CD8-positive, alpha-beta T cell (primary cell): ENCODE measurements at regions of chr3 and their contacts with region 1.

Region 1: DNA sequence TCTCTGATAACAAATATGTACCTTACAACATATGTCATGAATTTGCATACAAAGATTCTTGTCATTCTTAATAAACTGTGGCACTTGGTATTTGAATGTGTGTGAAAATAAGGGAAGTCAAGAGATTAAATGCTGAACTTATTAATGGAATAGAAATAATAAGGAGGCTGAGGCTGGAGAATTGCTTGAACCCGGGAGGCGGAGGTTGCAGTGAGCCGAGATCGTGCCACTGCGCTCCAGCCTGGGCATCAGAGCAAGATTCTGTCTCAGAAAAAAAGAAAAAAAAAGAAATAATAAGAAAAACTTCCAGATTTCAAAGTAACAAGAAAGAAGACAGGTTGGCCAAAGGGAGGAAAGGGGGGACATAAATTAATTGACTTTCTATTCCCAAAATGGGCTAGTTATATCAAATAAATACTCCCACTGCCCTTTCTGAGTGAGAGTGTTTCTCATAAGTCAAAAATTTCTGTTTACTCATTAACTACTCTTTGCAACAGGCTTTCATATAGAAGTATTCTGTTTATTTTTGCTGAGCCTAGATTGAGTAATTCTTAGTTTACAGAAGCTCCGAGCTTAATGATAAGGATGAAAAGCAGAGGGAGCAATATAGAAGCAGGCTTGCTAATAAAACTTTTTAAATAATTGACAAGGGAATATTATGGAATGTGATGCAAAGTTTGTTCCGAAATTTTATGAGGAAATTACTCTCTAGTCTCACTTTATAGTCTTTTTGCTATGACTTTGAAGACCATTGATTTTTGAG is 25.6 kb downstream of the KNG1 start:
- DNase-seq: no peak
- ATAC-seq: no peak
- H3K4me3 ChIP-seq: no peak overlapping the region
- H3K4me3 Mint-ChIP-seq: no peak overlapping the region
- H3K27ac ChIP-seq: no peak overlapping the region
- H3K27ac Mint-ChIP-seq: no peak overlapping the region
- H3K4me1 ChIP-seq: no peaks in the 10 kb centered on the region
- H3K4me1 Mint-ChIP-seq: peaks cover 2% of the 10 kb centered on the region
- H3K27me3 ChIP-seq: no peaks in the 10 kb centered on the region
- H3K27me3 Mint-ChIP-seq: no peaks in the 10 kb centered on the region
- CTCF ChIP-seq: no peak

Region 2: GRCh38 chr3:186608624-186609215 is 134.1 kb before region 1 on chr3:
- CTCF ChIA-PET with region 1: no interaction called
- POLR2A ChIA-PET with region 1: no interaction called
- intact Hi-C with region 1: no loop called
- DNase-seq: no peak
- ATAC-seq: no peak
- H3K4me3 ChIP-seq: no peak overlapping the region
- H3K4me3 Mint-ChIP-seq: no peak overlapping the region
- H3K27ac ChIP-seq: no peak overlapping the region
- H3K27ac Mint-ChIP-seq: no peak overlapping the region
- H3K4me1 ChIP-seq: no peaks in the 10 kb centered on the region
- H3K4me1 Mint-ChIP-seq: no peaks in the 10 kb centered on the region
- H3K27me3 ChIP-seq: no peaks in the 10 kb centered on the region
- H3K27me3 Mint-ChIP-seq: peaks cover 4% of the 10 kb centered on the region
- CTCF ChIP-seq: no peak

Region 3: DNA sequence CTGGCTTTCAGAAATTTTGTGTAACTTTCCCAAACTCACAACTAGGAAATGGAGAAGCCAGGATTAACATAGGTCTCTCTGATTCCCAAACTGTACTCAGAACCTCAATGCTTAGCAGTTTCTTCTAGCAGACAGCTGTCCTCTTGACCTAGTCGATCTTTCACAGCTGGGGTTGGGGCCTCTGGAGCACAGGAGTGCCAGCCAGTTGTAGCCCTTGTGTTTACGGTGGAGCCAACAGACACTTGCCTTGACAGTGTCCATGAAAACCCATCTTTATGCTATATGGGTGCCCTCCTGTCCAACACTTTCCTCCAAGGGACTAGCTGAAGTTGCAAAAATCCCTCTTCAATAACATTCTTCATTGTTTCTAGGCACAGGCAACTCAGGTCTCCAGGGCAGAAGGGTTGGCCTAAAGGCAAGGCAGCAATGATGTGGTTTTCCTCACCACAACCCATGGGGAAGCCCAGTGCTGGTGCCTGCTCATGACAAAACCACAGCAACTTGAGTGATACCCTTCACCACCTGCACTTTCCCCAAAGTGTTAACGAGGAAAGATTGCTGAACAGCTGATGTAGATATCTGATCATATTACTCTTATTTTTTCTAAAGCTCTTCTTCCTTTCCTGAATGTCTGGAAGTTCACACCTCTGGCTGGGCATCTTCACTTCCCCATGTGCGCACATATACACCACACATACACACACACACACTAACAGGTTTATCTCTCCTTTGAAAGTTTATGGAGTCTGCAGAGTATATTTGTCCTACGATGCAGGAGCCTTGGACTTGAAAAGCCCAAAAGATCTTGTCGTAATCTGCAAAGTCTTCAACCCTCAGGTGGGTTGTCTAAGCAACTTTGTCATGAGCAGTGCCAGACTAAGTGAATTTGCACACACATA is 36.7 kb before region 1 on chr3:
- CTCF ChIA-PET with region 1: interaction called, 3 read pairs
- POLR2A ChIA-PET with region 1: no interaction called
- intact Hi-C with region 1: loop called in 1 of 2 experiments (anchors 2 kb)
- DNase-seq: peak in 5 of 9 experiments; percentile 4 to 77 (median 66)
- ATAC-seq: peak; percentile 99
- H3K4me3 ChIP-seq: no peak overlapping the region
- H3K4me3 Mint-ChIP-seq: no peak overlapping the region
- H3K27ac ChIP-seq: no peak overlapping the region
- H3K27ac Mint-ChIP-seq: no peak overlapping the region
- H3K4me1 ChIP-seq: no peaks in the 10 kb centered on the region
- H3K4me1 Mint-ChIP-seq: peaks cover 11% of the 10 kb centered on the region
- H3K27me3 ChIP-seq: peaks cover 0 to 10% of the 10 kb centered on the region in 2 experiments
- H3K27me3 Mint-ChIP-seq: peaks cover 34% of the 10 kb centered on the region
- CTCF ChIP-seq: no peak

Region 4: DNA sequence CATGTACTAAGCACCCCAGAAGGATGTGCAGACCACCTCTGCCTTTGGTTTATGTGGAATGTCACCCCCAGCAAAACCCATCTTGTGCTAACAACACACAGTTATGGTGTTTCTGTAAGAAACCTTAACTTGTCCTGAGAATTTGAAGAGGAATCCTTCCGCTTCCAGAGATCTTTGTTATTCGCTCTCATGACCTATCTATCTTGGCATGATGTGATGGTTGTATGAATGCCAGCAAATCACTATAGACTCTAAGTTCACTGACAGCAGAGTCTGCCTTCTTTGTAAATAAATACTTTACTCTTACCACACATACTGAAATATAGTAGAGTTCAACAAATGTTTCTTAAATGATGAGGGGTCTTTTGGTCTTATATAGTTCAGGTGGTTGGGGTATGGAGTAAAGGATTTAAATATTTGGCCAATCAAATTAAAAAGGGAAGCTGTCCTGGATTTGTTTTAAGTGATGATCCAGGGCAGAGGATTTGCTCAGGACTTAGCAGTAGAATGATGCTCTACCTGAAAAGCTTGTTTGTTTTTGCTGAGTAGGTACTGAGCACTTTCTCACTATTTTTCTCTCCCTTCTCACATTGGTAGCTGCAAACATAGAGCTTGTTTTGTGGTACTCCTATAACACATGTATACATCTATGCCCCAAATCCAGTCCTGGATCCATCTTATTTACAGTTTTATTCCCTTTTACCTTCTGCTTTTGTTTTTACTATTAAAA is 426.6 kb after region 1 on chr3:
- CTCF ChIA-PET with region 1: no interaction called
- POLR2A ChIA-PET with region 1: no interaction called
- intact Hi-C with region 1: no loop called
- DNase-seq: no peak
- ATAC-seq: no peak
- H3K4me3 ChIP-seq: no peak overlapping the region
- H3K4me3 Mint-ChIP-seq: no peak overlapping the region
- H3K27ac ChIP-seq: no peak overlapping the region
- H3K27ac Mint-ChIP-seq: no peak overlapping the region
- H3K4me1 ChIP-seq: no peaks in the 10 kb centered on the region
- H3K4me1 Mint-ChIP-seq: peaks cover 5% of the 10 kb centered on the region
- H3K27me3 ChIP-seq: peaks cover 0 to 3% of the 10 kb centered on the region in 2 experiments
- H3K27me3 Mint-ChIP-seq: peaks cover 4% of the 10 kb centered on the region
- CTCF ChIP-seq: no peak